B cell (primary cell): ENCODE measurements at regions of chr15 and their contacts with region 1.

Region 1: GRCh38 chr15:48352474-48353072 is 21.3 kb downstream of the DUT start:
- DNase-seq: peak; percentile 69
- ATAC-seq: peak; percentile 67
- H3K4me3 ChIP-seq: no peak overlapping the region
- H3K4me3 Mint-ChIP-seq: no peak overlapping the region
- H3K27ac ChIP-seq: no peak overlapping the region
- H3K27ac Mint-ChIP-seq: no peak overlapping the region
- H3K4me1 ChIP-seq: peaks cover 0 to 2% of the 10 kb centered on the region in 2 donors
- H3K4me1 Mint-ChIP-seq: peaks cover 2% of the 10 kb centered on the region
- H3K27me3 ChIP-seq: no peaks in the 10 kb centered on the region
- H3K27me3 Mint-ChIP-seq: peaks cover 3% of the 10 kb centered on the region
- CTCF ChIP-seq: peak; percentile 89

Region 2: GRCh38 chr15:47196057-47196456 is 1156.5 kb before region 1 on chr15:
- CTCF ChIA-PET with region 1: interaction called, 16 read pairs
- POLR2A ChIA-PET with region 1: no interaction called
- intact Hi-C with region 1: no loop called
- DNase-seq: peak; percentile 50
- ATAC-seq: no peak
- H3K4me3 ChIP-seq: no peak overlapping the region
- H3K4me3 Mint-ChIP-seq: no peak overlapping the region
- H3K27ac ChIP-seq: no peak overlapping the region
- H3K27ac Mint-ChIP-seq: no peak overlapping the region
- H3K4me1 ChIP-seq: no peaks in the 10 kb centered on the region
- H3K4me1 Mint-ChIP-seq: no peaks in the 10 kb centered on the region
- H3K27me3 ChIP-seq: no peaks in the 10 kb centered on the region
- H3K27me3 Mint-ChIP-seq: no peaks in the 10 kb centered on the region
- CTCF ChIP-seq: peak; percentile 58

Region 3: GRCh38 chr15:47218295-47218694 is 1134.3 kb before region 1 on chr15:
- CTCF ChIA-PET with region 1: no interaction called
- POLR2A ChIA-PET with region 1: no interaction called
- intact Hi-C with region 1: no loop called
- DNase-seq: no peak
- ATAC-seq: no peak
- H3K4me3 ChIP-seq: no peak overlapping the region
- H3K4me3 Mint-ChIP-seq: no peak overlapping the region
- H3K27ac ChIP-seq: no peak overlapping the region
- H3K27ac Mint-ChIP-seq: no peak overlapping the region
- H3K4me1 ChIP-seq: no peaks in the 10 kb centered on the region
- H3K4me1 Mint-ChIP-seq: no peaks in the 10 kb centered on the region
- H3K27me3 ChIP-seq: no peaks in the 10 kb centered on the region
- H3K27me3 Mint-ChIP-seq: no peaks in the 10 kb centered on the region
- CTCF ChIP-seq: no peak

Region 4: GRCh38 chr15:48330855-48331795 is 21.4 kb before region 1 on chr15 and contains the start of gene DUT:
- CTCF ChIA-PET with region 1: interaction called, 35 read pairs
- POLR2A ChIA-PET with region 1: no interaction called
- intact Hi-C with region 1: loop called (anchors 2 kb)
- DNase-seq: peak; percentile 89
- ATAC-seq: peak; percentile 78
- H3K4me3 ChIP-seq: peak within 1 kb of the TSS; percentile 76 to 90 (median 77)
- H3K4me3 Mint-ChIP-seq: peak within 1 kb of the TSS; percentile 94
- H3K27ac ChIP-seq: peak within 1 kb of the TSS; percentile 83 to 90
- H3K27ac Mint-ChIP-seq: peak within 1 kb of the TSS; percentile 95
- H3K4me1 ChIP-seq: peaks cover 15 to 17% of the 10 kb centered on the region in 2 donors
- H3K4me1 Mint-ChIP-seq: peaks cover 25% of the 10 kb centered on the region
- H3K27me3 ChIP-seq: no peaks in the 10 kb centered on the region
- H3K27me3 Mint-ChIP-seq: no peaks in the 10 kb centered on the region
- CTCF ChIP-seq: no peak
- total RNA-seq, gene DUT: 84.7 and 89.8 TPM in 2 replicates

Region 5: GRCh38 chr15:48336940-48337339 is 15.6 kb before region 1 on chr15:
- CTCF ChIA-PET with region 1: interaction called, 35 read pairs
- POLR2A ChIA-PET with region 1: no interaction called
- intact Hi-C with region 1: loop called (anchors 2 kb)
- DNase-seq: peak; percentile 21
- ATAC-seq: peak; percentile 35
- H3K4me3 ChIP-seq: no peak overlapping the region
- H3K4me3 Mint-ChIP-seq: no peak overlapping the region
- H3K27ac ChIP-seq: no peak overlapping the region
- H3K27ac Mint-ChIP-seq: no peak overlapping the region
- H3K4me1 ChIP-seq: peaks cover 4 to 7% of the 10 kb centered on the region in 2 donors
- H3K4me1 Mint-ChIP-seq: peaks cover 14% of the 10 kb centered on the region
- H3K27me3 ChIP-seq: no peaks in the 10 kb centered on the region
- H3K27me3 Mint-ChIP-seq: no peaks in the 10 kb centered on the region
- CTCF ChIP-seq: peak; percentile 36

Region 6: DNA sequence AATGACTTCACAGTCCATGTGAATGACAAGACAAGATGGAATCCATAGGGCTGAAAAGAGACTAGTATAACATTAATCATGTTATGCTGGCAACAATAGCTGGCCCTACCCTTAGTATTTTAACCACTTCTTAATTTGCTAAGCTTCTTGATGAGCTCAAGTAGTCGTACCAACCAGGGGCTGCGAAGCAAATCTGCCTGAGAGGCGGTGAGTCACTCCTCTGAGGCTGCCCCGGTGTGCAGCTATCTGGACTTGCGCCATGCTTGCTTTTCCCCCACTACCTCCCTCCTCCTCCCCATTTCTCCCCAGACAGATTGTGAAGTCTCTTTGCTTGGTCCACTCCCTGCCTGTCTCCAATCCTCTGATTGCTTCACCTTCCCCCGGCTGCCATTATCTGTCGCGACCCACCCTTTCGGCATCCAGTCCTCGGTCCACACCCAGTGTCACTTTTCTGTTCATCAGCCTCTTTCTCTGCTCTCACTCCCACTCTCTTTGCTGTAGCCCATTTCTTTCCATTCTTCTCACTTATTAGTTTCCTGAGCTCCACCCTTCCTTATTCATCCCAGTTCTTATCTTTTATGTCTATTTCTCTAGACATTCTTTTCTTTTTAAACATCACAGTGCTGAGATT is 21.4 kb after region 1 on chr15:
- CTCF ChIA-PET with region 1: interaction called, 11 read pairs
- POLR2A ChIA-PET with region 1: no interaction called
- intact Hi-C with region 1: no loop called
- DNase-seq: no peak
- ATAC-seq: no peak
- H3K4me3 ChIP-seq: no peak overlapping the region
- H3K4me3 Mint-ChIP-seq: no peak overlapping the region
- H3K27ac ChIP-seq: no peak overlapping the region
- H3K27ac Mint-ChIP-seq: no peak overlapping the region
- H3K4me1 ChIP-seq: no peaks in the 10 kb centered on the region
- H3K4me1 Mint-ChIP-seq: no peaks in the 10 kb centered on the region
- H3K27me3 ChIP-seq: peaks cover 0 to 15% (median 2%) of the 10 kb centered on the region in 4 experiments
- H3K27me3 Mint-ChIP-seq: peaks cover 37% of the 10 kb centered on the region
- CTCF ChIP-seq: no peak

Region 7: GRCh38 chr15:48532946-48533345 is 180.4 kb after region 1 on chr15:
- CTCF ChIA-PET with region 1: no interaction called
- POLR2A ChIA-PET with region 1: no interaction called
- intact Hi-C with region 1: no loop called
- DNase-seq: no peak
- ATAC-seq: no peak
- H3K4me3 ChIP-seq: no peak overlapping the region
- H3K4me3 Mint-ChIP-seq: no peak overlapping the region
- H3K27ac ChIP-seq: no peak overlapping the region
- H3K27ac Mint-ChIP-seq: no peak overlapping the region
- H3K4me1 ChIP-seq: no peaks in the 10 kb centered on the region
- H3K4me1 Mint-ChIP-seq: no peaks in the 10 kb centered on the region
- H3K27me3 ChIP-seq: no peaks in the 10 kb centered on the region
- H3K27me3 Mint-ChIP-seq: no peaks in the 10 kb centered on the region
- CTCF ChIP-seq: no peak

Region 8: GRCh38 chr15:49145651-49146609 is 793.4 kb after region 1 on chr15:
- CTCF ChIA-PET with region 1: no interaction called
- POLR2A ChIA-PET with region 1: no interaction called
- intact Hi-C with region 1: loop called (anchors 10 kb)
- DNase-seq: peak; percentile 53
- ATAC-seq: no peak
- H3K4me3 ChIP-seq: no peak overlapping the region
- H3K4me3 Mint-ChIP-seq: no peak overlapping the region
- H3K27ac ChIP-seq: peak overlapping the region in 1 of 2 donors; percentile 12
- H3K27ac Mint-ChIP-seq: no peak overlapping the region
- H3K4me1 ChIP-seq: peaks cover 5 to 14% of the 10 kb centered on the region in 2 donors
- H3K4me1 Mint-ChIP-seq: peaks cover 36% of the 10 kb centered on the region
- H3K27me3 ChIP-seq: no peaks in the 10 kb centered on the region
- H3K27me3 Mint-ChIP-seq: no peaks in the 10 kb centered on the region
- CTCF ChIP-seq: peak; percentile 70

Region 9: DNA sequence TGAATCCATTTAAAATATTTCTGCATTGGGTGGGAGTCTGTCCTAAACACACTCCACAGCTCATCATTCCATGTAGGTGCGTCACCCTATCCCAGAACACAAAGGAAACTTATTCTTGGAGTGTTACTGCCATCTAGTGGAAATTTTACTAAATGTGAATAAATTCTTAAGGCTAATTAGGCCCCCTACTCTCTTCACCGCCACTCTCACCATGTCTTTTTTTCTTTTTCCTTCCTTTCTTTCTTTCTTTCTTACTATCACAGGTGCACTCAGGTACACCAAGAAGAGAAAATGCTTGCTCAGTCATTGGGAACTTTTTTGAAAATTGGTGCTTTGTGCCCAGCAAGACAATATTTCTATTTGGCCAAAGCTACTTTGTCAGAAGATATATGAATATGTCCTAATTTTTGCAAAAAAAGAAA is 1792.9 kb after region 1 on chr15:
- CTCF ChIA-PET with region 1: no interaction called
- POLR2A ChIA-PET with region 1: no interaction called
- intact Hi-C with region 1: loop called (anchors 10 kb)
- DNase-seq: peak; percentile 64
- ATAC-seq: peak; percentile 33
- H3K4me3 ChIP-seq: no peak overlapping the region
- H3K4me3 Mint-ChIP-seq: no peak overlapping the region
- H3K27ac ChIP-seq: no peak overlapping the region
- H3K27ac Mint-ChIP-seq: no peak overlapping the region
- H3K4me1 ChIP-seq: no peaks in the 10 kb centered on the region
- H3K4me1 Mint-ChIP-seq: peaks cover 4% of the 10 kb centered on the region
- H3K27me3 ChIP-seq: no peaks in the 10 kb centered on the region
- H3K27me3 Mint-ChIP-seq: no peaks in the 10 kb centered on the region
- CTCF ChIP-seq: peak; percentile 81